CD4-positive, alpha-beta T cell (primary cell): ENCODE measurements at regions of chr9 and their contacts with region 1.

Region 1: DNA sequence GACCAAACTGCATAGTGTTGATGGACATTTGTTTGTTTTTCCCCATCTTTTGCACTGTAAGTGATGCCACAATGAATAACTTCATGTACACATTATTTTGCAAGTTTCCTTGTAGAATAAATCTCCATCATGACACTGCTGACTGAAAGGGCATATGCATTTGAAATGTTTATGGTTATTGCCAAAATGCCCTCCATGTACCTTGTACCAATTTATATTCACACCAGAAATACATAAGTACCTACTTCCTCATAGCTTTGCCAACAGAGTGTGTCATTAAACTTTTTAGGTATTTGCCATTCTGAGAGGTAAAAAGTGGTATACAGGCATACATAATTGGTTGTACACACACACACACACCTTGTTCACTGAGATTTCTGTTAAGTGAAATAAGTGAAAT is 361.0 kb upstream of the PCSK5 start:
- DNase-seq: no peak
- ATAC-seq: no peak
- H3K4me3 ChIP-seq: no peak overlapping the region
- H3K4me3 Mint-ChIP-seq: no peak overlapping the region
- H3K27ac ChIP-seq: no peak overlapping the region
- H3K27ac Mint-ChIP-seq: no peak overlapping the region
- H3K4me1 ChIP-seq: no peaks in the 10 kb centered on the region
- H3K4me1 Mint-ChIP-seq: no peaks in the 10 kb centered on the region
- H3K27me3 ChIP-seq: no peaks in the 10 kb centered on the region
- H3K27me3 Mint-ChIP-seq: no peaks in the 10 kb centered on the region
- CTCF ChIP-seq: no peak

Region 2: DNA sequence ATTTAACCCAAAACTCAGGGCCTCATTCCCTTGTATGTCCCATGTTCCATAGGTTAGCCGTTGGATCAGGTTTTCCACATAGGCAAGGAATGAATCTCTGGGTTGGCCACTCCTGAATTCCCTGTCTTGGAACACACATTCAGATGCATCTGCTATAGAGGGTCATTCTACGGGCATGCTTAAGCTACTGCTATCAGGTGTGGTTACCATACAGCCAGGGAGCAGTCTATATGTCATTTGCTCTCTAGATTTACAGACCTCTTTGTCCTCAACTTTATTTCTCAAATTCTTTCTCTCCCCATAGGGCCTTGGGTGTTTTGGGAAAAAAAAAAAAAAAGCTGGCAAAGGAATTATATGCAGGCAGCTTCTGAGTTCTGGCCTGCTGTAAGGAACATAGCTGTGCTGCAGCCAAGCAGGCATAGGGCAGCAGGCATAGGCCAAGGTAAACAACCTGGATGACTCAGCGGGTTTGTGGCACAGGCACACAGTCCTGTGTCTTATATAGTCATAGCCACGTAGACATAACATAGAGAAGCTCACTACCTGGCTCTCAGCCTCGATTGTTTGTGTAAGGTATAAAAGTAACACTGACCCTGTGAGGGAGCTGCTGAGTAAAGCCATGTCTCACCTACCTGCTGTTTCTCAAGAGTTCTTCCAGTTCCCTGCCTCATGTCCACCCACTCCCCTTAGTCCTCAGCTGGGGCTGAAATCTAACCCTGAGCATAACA is 299.7 kb before region 1 on chr9:
- CTCF ChIA-PET with region 1: no interaction called
- POLR2A ChIA-PET with region 1: no interaction called
- intact Hi-C with region 1: no loop called
- DNase-seq: no peak
- ATAC-seq: no peak
- H3K4me3 ChIP-seq: no peak overlapping the region
- H3K4me3 Mint-ChIP-seq: no peak overlapping the region
- H3K27ac ChIP-seq: no peak overlapping the region
- H3K27ac Mint-ChIP-seq: no peak overlapping the region
- H3K4me1 ChIP-seq: no peaks in the 10 kb centered on the region
- H3K4me1 Mint-ChIP-seq: no peaks in the 10 kb centered on the region
- H3K27me3 ChIP-seq: no peaks in the 10 kb centered on the region
- H3K27me3 Mint-ChIP-seq: no peaks in the 10 kb centered on the region
- CTCF ChIP-seq: no peak

Region 3: GRCh38 chr9:75669701-75670100 is 140.2 kb after region 1 on chr9:
- CTCF ChIA-PET with region 1: no interaction called
- POLR2A ChIA-PET with region 1: no interaction called
- intact Hi-C with region 1: no loop called
- DNase-seq: no peak
- ATAC-seq: no peak
- H3K4me3 ChIP-seq: no peak overlapping the region
- H3K4me3 Mint-ChIP-seq: no peak overlapping the region
- H3K27ac ChIP-seq: no peak overlapping the region
- H3K27ac Mint-ChIP-seq: no peak overlapping the region
- H3K4me1 ChIP-seq: no peaks in the 10 kb centered on the region
- H3K4me1 Mint-ChIP-seq: no peaks in the 10 kb centered on the region
- H3K27me3 ChIP-seq: no peaks in the 10 kb centered on the region
- H3K27me3 Mint-ChIP-seq: peaks cover 4% of the 10 kb centered on the region
- CTCF ChIP-seq: no peak

Region 4: GRCh38 chr9:77092536-77092935 is 1563.1 kb after region 1 on chr9:
- CTCF ChIA-PET with region 1: no interaction called
- POLR2A ChIA-PET with region 1: no interaction called
- intact Hi-C with region 1: loop called in 1 of 2 experiments (anchors 10 kb)
- DNase-seq: no peak
- ATAC-seq: no peak
- H3K4me3 ChIP-seq: no peak overlapping the region
- H3K4me3 Mint-ChIP-seq: no peak overlapping the region
- H3K27ac ChIP-seq: no peak overlapping the region
- H3K27ac Mint-ChIP-seq: no peak overlapping the region
- H3K4me1 ChIP-seq: no peaks in the 10 kb centered on the region
- H3K4me1 Mint-ChIP-seq: no peaks in the 10 kb centered on the region
- H3K27me3 ChIP-seq: peaks cover 0 to 3% of the 10 kb centered on the region in 2 experiments
- H3K27me3 Mint-ChIP-seq: peaks cover 28% of the 10 kb centered on the region
- CTCF ChIP-seq: no peak